ENCODE measurements at regions of chr5 and their contacts with region 1.

Region 1: DNA sequence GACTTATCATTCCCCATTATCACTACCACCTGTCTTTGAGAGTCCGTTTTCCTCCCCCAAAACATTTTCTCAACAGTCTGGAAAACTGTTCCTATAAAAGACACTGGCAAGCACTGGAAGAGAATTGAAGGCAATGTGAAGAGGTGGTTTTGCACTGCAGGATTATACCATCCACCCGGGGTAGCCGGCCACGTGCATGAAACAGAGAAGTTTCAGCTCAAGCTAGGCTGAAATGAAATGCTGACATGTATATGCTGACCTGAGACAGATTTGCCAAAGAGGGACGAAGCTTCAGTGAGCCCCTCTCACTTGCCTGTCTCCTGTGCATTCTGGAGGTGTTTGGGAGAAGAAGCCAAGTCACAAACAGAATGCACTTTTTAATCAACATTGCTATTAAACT is 567.0 kb downstream of the EBF1 start:
- DNase-seq: no peak
- ATAC-seq: no peak
- H3K4me3 ChIP-seq: no peak overlapping the region
- H3K27ac ChIP-seq: no peak overlapping the region
- H3K4me1 ChIP-seq: peaks cover 2% of the 10 kb centered on the region
- H3K27me3 ChIP-seq: no peaks in the 10 kb centered on the region
- CTCF ChIP-seq: no peak
- EP300 ChIP-seq: no peak
- POLR2A ChIP-seq: no peak
- RAD21 ChIP-seq: no peak

Region 2: GRCh38 chr5:158390577-158390976 is 142.2 kb before region 1 on chr5:
- CTCF ChIA-PET with region 1: no interaction called
- POLR2A ChIA-PET with region 1: interaction called, 10 read pairs
- RAD21 ChIA-PET with region 1: no interaction called
- SMC1A ChIA-PET with region 1: interaction called, 3 read pairs
- in situ Hi-C with region 1: no loop called
- intact Hi-C with region 1: no loop called
- DNase-seq: no peak
- ATAC-seq: peak; percentile 47
- H3K4me3 ChIP-seq: no peak overlapping the region
- H3K27ac ChIP-seq: no peak overlapping the region
- H3K4me1 ChIP-seq: no peaks in the 10 kb centered on the region
- H3K27me3 ChIP-seq: no peaks in the 10 kb centered on the region
- CTCF ChIP-seq: no peak
- EP300 ChIP-seq: no peak
- POLR2A ChIP-seq: no peak
- RAD21 ChIP-seq: no peak

Measured in GM12878 (cell line).